Head of caudate nucleus (tissue), 42 donors: ENCODE measurements at regions of chr17 and their contacts with region 1.

Region 1: GRCh38 chr17:80454557-80455335 is 21.7 kb downstream of the NPTX1 start:
- DNase-seq: peak; percentile 90 to 99 (median 97)

Region 2: GRCh38 chr17:80279895-80280294 is 174.9 kb before region 1 on chr17:
- intact Hi-C with region 1: no loop called
- DNase-seq: peak in 6 of 42 donors; percentile 16 to 53 (median 32)

Region 3: GRCh38 chr17:80414803-80415625 is 39.7 kb before region 1 on chr17 and contains the start of gene ENDOV:
- intact Hi-C with region 1: loop called (anchors 2 kb)
- DNase-seq: peak; percentile 86 to 99 (median 96)

Region 4: GRCh38 chr17:80544655-80545498 is 90.1 kb after region 1 on chr17 and contains the start of gene RPTOR:
- intact Hi-C with region 1: loop called (anchors 10 kb)
- DNase-seq: peak; percentile 77 to 99 (median 95)

Region 5: DNA sequence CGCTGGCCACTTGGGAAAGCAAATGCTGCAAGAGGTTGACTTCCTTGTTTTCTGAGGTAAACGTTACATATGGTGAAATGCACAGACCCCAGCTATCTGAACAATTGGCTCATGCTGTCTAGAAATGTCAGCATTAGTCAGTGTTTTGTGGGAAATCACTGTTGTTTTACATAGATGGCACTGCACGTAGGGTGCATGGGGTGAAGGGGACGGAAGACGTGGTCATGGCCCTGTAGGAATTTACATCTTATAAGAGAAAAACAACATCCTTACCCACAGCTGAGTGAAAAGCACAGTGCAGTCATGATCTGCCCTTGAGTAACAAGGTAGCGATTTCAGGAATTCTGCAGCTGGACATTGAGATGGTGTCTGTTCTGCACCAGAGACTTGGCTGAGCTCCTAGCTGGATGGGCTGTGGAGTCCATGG is 105.1 kb after region 1 on chr17:
- intact Hi-C with region 1: no loop called
- DNase-seq: no peak

Region 6: GRCh38 chr17:80637048-80637781 is 182.5 kb after region 1 on chr17:
- intact Hi-C with region 1: no loop called
- DNase-seq: peak in 1 of 42 donors; percentile 29

Region 7: DNA sequence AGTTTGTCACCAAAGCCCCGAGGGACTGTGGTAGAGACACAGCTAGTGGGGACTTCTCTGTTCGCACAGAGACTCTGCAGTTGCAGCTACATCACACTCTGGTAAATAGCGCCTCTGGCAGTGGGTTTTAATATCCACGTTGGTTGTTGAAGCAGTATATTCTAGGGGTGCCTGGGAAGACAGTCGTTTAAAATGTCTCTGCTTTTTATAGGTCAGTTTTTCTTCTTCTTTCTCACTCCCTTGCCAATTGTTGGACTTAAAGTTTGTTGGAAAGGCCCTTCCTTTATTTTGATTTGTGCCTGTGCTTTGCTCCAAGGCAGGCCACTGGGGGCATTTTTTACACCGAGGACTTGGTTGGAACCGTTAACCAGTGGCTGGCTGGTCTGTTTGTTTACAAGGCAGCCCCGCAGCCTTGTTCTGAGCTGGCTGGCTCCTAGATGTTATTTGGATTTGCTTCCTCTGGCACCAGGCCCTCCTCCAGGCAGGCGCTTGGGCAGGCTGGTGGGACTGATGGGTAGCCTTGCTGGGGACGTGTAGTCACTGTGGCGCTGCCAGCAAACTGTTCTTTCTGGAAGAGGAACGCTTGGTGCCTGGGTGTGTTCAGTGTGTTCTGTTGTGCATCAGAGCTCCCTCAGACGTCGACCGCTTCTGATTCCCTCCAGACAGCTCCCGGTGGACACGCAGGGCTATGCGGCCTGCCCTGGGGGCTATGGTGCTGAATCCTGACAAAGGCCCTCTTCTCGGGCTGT is 318.7 kb after region 1 on chr17:
- intact Hi-C with region 1: loop called (anchors 10 kb)
- DNase-seq: peak in 41 of 42 donors; percentile 46 to 90 (median 77)